WTC11 (cell line): ENCODE measurements at regions of chr22 and their contacts with region 1.

Region 1: GRCh38 chr22:22745225-22746060 is 101.0 kb downstream of the GGTLC2 start:
- DNase-seq: peak; percentile 74
- ATAC-seq: peak; percentile 86
- H3K4me3 Mint-ChIP-seq: no peak overlapping the region
- H3K27ac Mint-ChIP-seq: no peak overlapping the region
- H3K4me1 Mint-ChIP-seq: peaks cover 19% of the 10 kb centered on the region
- H3K27me3 Mint-ChIP-seq: peaks cover 91% of the 10 kb centered on the region
- CTCF ChIP-seq: peak; percentile 35; the same call in 1 of the 2 replicates

Region 2: DNA sequence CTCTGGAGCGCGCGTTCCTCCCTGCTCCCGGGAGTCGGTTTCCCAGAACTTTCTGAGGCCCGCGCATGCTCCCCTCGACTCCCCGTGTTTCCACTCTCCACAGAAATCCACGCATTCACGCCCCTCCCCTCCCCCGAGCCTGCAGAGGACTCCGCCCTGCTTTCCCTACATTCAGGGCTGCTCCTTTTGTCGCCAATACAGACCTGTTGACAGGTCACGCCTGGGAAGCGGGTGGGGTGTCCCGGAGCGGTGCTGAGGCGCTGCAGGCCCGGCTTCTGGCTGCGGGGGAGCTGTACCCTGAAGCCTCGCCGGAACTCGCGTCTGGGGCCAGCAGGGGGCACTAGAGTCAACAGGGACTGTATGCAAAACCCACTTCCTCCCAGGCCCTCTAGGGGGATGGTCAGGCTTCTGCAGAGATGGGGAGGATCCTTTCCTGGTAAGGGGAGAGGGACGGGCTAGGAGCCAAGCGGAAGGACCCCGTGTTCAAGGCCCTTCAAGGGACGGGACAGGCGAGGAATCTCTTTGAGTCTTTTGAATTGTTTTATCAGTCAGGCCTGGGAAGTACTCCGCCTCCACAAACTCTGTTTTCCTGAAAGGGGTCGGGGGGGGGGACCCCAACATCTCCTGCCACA is 186.4 kb before region 1 on chr22 and contains the start of gene PRAME:
- CTCF ChIA-PET with region 1: no interaction called
- POLR2A ChIA-PET with region 1: no interaction called
- DNase-seq: peak; percentile 93
- ATAC-seq: peak; percentile 97
- H3K4me3 Mint-ChIP-seq: no peak within 1 kb of the TSS
- H3K27ac Mint-ChIP-seq: no peak within 1 kb of the TSS
- H3K4me1 Mint-ChIP-seq: no peaks in the 10 kb centered on the region
- H3K27me3 Mint-ChIP-seq: peaks cover 79% of the 10 kb centered on the region
- CTCF ChIP-seq: peak; percentile 89
- total RNA-seq, gene PRAME: 1.4 to 1.7 TPM (median 1.5 TPM) in 3 replicates

Region 3: GRCh38 chr22:22702237-22703202 is 42.9 kb before region 1 on chr22:
- CTCF ChIA-PET with region 1: interaction called, 27 read pairs
- POLR2A ChIA-PET with region 1: no interaction called
- DNase-seq: peak; percentile 61
- ATAC-seq: peak; percentile 86
- H3K4me3 Mint-ChIP-seq: no peak overlapping the region
- H3K27ac Mint-ChIP-seq: no peak overlapping the region
- H3K4me1 Mint-ChIP-seq: no peaks in the 10 kb centered on the region
- H3K27me3 Mint-ChIP-seq: peaks cover 99% of the 10 kb centered on the region
- CTCF ChIP-seq: peak; percentile 52; the same call in 1 of the 2 replicates

Region 4: DNA sequence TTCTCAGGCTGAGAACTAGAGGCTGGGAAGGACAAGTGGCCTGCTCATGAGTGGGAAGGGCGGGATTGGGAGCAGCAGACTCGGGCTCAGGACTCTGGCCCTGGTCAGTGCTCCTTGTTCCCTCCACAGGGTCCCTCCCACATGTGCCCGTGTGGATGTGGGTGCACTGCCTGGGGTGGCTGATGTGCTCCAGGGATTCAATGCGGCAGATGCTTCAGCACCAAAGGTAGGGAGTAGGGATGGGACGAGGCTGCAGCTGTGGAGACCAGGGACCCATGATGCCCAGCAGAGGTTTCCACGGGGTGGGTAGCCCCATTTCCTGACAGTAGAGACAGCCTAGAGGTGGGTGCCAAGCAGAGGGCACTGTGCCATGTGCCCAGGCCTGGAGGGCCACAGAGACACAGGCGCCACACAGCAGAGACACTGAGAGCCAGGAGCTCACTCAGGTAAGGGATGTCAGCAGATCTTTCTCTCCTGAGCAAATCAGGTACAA is 11.5 kb before region 1 on chr22:
- CTCF ChIA-PET with region 1: interaction called, 24 read pairs
- POLR2A ChIA-PET with region 1: no interaction called
- DNase-seq: no peak
- ATAC-seq: no peak
- H3K4me3 Mint-ChIP-seq: no peak overlapping the region
- H3K27ac Mint-ChIP-seq: no peak overlapping the region
- H3K4me1 Mint-ChIP-seq: peaks cover 13% of the 10 kb centered on the region
- H3K27me3 Mint-ChIP-seq: peaks cover 98% of the 10 kb centered on the region
- CTCF ChIP-seq: no peak

Region 5: GRCh38 chr22:22787786-22788459 is 42.5 kb after region 1 on chr22:
- CTCF ChIA-PET with region 1: interaction called, 19 read pairs
- POLR2A ChIA-PET with region 1: no interaction called
- DNase-seq: peak; percentile 82
- ATAC-seq: peak; percentile 90
- H3K4me3 Mint-ChIP-seq: no peak overlapping the region
- H3K27ac Mint-ChIP-seq: no peak overlapping the region
- H3K4me1 Mint-ChIP-seq: no peaks in the 10 kb centered on the region
- H3K27me3 Mint-ChIP-seq: peaks cover 88% of the 10 kb centered on the region
- CTCF ChIP-seq: peak; percentile 66; the same call in 1 of the 2 replicates

Region 6: GRCh38 chr22:22823131-22823810 is 77.8 kb after region 1 on chr22:
- CTCF ChIA-PET with region 1: no interaction called
- POLR2A ChIA-PET with region 1: no interaction called
- DNase-seq: no peak
- ATAC-seq: no peak
- H3K4me3 Mint-ChIP-seq: no peak overlapping the region
- H3K27ac Mint-ChIP-seq: peak overlapping the region; percentile 27; the same call in 1 of the 2 replicates
- H3K4me1 Mint-ChIP-seq: no peaks in the 10 kb centered on the region
- H3K27me3 Mint-ChIP-seq: peaks cover 94% of the 10 kb centered on the region
- CTCF ChIP-seq: no peak

Region 7: GRCh38 chr22:22848364-22848866 is 103.0 kb after region 1 on chr22:
- CTCF ChIA-PET with region 1: interaction called, 12 read pairs
- POLR2A ChIA-PET with region 1: no interaction called
- DNase-seq: peak; percentile 90
- ATAC-seq: peak; percentile 98
- H3K4me3 Mint-ChIP-seq: no peak overlapping the region
- H3K27ac Mint-ChIP-seq: no peak overlapping the region
- H3K4me1 Mint-ChIP-seq: no peaks in the 10 kb centered on the region; the same call in 1 of the 2 replicates
- H3K27me3 Mint-ChIP-seq: peaks cover 83% of the 10 kb centered on the region
- CTCF ChIP-seq: peak; percentile 82